Activated CD4-positive, alpha-beta memory T cell treated with anti-CD3 and anti-CD28 coated beads, Interleukin-2, amount 10 ng/mL, durations not matched to agents 7 days and 5 days (primary cell): ENCODE measurements at regions of chr12 and their contacts with region 1.

Region 1: GRCh38 chr12:21501379-21501956 is at the starts of genes GOLT1B and RECQL:
- DNase-seq: peak; percentile 93
- H3K4me3 Mint-ChIP-seq: no peak within 1 kb of the TSS
- H3K27ac Mint-ChIP-seq: no peak within 1 kb of the TSS
- H3K4me1 Mint-ChIP-seq: peaks cover 56% of the 10 kb centered on the region
- H3K27me3 Mint-ChIP-seq: no peaks in the 10 kb centered on the region
- total RNA-seq, gene GOLT1B: 44.1 to 57.5 TPM
- total RNA-seq, gene RECQL: 87.6 to 100 TPM

Region 2: DNA sequence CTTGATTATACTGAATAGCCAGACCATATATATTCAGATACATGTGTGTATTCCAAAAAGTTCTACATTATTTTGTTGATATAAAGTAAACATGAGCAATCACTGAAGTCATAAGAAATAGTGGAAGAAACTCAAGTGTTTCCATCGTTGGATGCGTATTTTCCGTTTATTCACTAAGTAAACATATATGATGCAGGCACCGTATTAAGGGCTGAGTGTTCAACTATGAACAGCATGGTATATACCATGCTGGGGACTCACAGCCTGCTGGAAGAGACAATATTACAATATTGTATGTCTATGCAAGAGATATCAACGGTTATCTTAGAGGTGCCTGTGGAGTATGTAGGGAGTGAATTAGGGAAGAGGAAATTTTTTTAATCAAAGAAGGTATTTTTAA is 62.8 kb before region 1 on chr12:
- CTCF ChIA-PET with region 1: interaction called, 3 read pairs
- POLR2A ChIA-PET with region 1: interaction called, 31 read pairs
- DNase-seq: no peak
- H3K4me3 Mint-ChIP-seq: peak overlapping the region; percentile 93
- H3K27ac Mint-ChIP-seq: peak overlapping the region; percentile 90
- H3K4me1 Mint-ChIP-seq: peaks cover 36% of the 10 kb centered on the region
- H3K27me3 Mint-ChIP-seq: peaks cover 9% of the 10 kb centered on the region

Region 3: DNA sequence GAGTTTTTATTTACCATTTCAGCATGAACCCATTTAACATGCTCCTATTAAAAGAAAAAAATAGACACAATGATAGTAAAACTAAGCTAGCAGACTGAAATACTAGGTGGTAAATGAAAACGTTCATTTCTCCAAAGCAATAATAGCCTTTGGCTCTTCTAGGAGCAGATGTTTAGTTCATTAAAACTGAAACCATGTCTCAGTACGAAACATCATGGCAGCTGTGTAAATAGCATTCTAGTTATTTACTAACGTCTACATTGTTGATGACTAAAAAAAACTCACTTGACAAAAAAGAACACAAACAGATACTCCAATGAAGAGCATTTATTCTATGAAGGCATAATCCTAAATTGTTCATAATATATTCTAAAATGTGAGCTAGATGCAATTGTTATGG is 17.9 kb before region 1 on chr12:
- CTCF ChIA-PET with region 1: no interaction called
- POLR2A ChIA-PET with region 1: interaction called, 14 read pairs
- DNase-seq: no peak
- H3K4me3 Mint-ChIP-seq: no peak overlapping the region
- H3K27ac Mint-ChIP-seq: no peak overlapping the region
- H3K4me1 Mint-ChIP-seq: peaks cover 7% of the 10 kb centered on the region
- H3K27me3 Mint-ChIP-seq: no peaks in the 10 kb centered on the region

Region 4: DNA sequence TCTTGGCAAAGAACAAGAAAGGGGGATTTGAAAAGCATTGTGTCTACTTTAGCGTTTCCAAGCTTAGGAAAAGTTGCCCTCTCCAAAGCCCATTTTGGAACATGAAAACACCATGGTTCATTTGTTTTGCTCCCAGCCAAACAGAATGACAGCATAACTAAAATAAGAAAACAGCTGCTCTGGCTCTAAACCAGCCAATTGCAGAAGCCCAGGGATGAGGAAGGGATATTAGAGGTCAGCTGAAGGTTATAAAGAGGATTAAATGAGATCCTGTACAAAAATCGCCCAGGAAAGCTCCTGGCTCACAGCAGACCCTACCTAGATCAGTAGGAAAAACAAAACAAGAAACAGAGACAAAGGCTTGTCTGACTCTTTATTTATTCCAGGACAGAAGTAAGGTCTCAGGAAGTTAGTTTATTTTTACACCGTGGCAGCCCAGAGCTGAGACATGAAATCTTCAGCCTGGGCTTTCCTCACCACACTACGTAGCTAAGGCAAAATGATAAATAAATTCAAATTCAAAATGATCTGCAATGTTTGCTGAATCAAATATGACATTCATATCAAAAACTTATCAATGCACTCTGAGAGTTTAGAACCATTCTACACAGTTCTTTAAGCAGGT is 50.5 kb after region 1 on chr12:
- CTCF ChIA-PET with region 1: no interaction called
- POLR2A ChIA-PET with region 1: no interaction called
- DNase-seq: no peak
- H3K4me3 Mint-ChIP-seq: no peak overlapping the region
- H3K27ac Mint-ChIP-seq: no peak overlapping the region
- H3K4me1 Mint-ChIP-seq: no peaks in the 10 kb centered on the region
- H3K27me3 Mint-ChIP-seq: no peaks in the 10 kb centered on the region

Region 5: GRCh38 chr12:21580748-21581516 is 79.5 kb after region 1 on chr12:
- CTCF ChIA-PET with region 1: no interaction called
- POLR2A ChIA-PET with region 1: no interaction called
- DNase-seq: no peak
- H3K4me3 Mint-ChIP-seq: no peak overlapping the region
- H3K27ac Mint-ChIP-seq: no peak overlapping the region
- H3K4me1 Mint-ChIP-seq: no peaks in the 10 kb centered on the region
- H3K27me3 Mint-ChIP-seq: peaks cover 2% of the 10 kb centered on the region

Region 6: GRCh38 chr12:21650833-21651396 is 149.4 kb after region 1 on chr12:
- CTCF ChIA-PET with region 1: no interaction called
- POLR2A ChIA-PET with region 1: interaction called, 16 read pairs
- DNase-seq: no peak
- H3K4me3 Mint-ChIP-seq: no peak overlapping the region
- H3K27ac Mint-ChIP-seq: peak overlapping the region; percentile 30
- H3K4me1 Mint-ChIP-seq: peaks cover 80% of the 10 kb centered on the region
- H3K27me3 Mint-ChIP-seq: no peaks in the 10 kb centered on the region

Region 7: GRCh38 chr12:21677622-21678277 is 176.3 kb after region 1 on chr12:
- CTCF ChIA-PET with region 1: interaction called, 11 read pairs
- POLR2A ChIA-PET with region 1: interaction called, 16 read pairs
- DNase-seq: no peak
- H3K4me3 Mint-ChIP-seq: no peak overlapping the region
- H3K27ac Mint-ChIP-seq: no peak overlapping the region
- H3K4me1 Mint-ChIP-seq: peaks cover 34% of the 10 kb centered on the region
- H3K27me3 Mint-ChIP-seq: no peaks in the 10 kb centered on the region